Activated CD8-positive, alpha-beta T cell treated with anti-CD3 and anti-CD28 coated beads for 36 hours (primary cell): ENCODE measurements at regions of chr12 and their contacts with region 1.

Region 1: GRCh38 chr12:11730299-11731041 is 81.0 kb downstream of the ETV6 start:
- DNase-seq: no peak
- ATAC-seq: no peak
- H3K4me3 Mint-ChIP-seq: no peak overlapping the region
- H3K27ac Mint-ChIP-seq: peak overlapping the region; percentile 89
- H3K4me1 Mint-ChIP-seq: peaks cover 74% of the 10 kb centered on the region
- H3K27me3 Mint-ChIP-seq: no peaks in the 10 kb centered on the region
- CTCF ChIP-seq: no peak

Region 2: GRCh38 chr12:11513288-11513687 is 217.2 kb before region 1 on chr12:
- CTCF ChIA-PET with region 1: no interaction called
- POLR2A ChIA-PET with region 1: no interaction called
- intact Hi-C with region 1: no loop called
- DNase-seq: no peak
- ATAC-seq: no peak
- H3K4me3 Mint-ChIP-seq: no peak overlapping the region
- H3K27ac Mint-ChIP-seq: no peak overlapping the region
- H3K4me1 Mint-ChIP-seq: no peaks in the 10 kb centered on the region
- H3K27me3 Mint-ChIP-seq: no peaks in the 10 kb centered on the region
- CTCF ChIP-seq: no peak

Region 3: GRCh38 chr12:11535127-11535526 is 195.3 kb before region 1 on chr12:
- CTCF ChIA-PET with region 1: no interaction called
- POLR2A ChIA-PET with region 1: no interaction called
- intact Hi-C with region 1: no loop called
- DNase-seq: no peak
- ATAC-seq: no peak
- H3K4me3 Mint-ChIP-seq: no peak overlapping the region
- H3K27ac Mint-ChIP-seq: no peak overlapping the region
- H3K4me1 Mint-ChIP-seq: no peaks in the 10 kb centered on the region
- H3K27me3 Mint-ChIP-seq: no peaks in the 10 kb centered on the region
- CTCF ChIP-seq: no peak

Region 4: DNA sequence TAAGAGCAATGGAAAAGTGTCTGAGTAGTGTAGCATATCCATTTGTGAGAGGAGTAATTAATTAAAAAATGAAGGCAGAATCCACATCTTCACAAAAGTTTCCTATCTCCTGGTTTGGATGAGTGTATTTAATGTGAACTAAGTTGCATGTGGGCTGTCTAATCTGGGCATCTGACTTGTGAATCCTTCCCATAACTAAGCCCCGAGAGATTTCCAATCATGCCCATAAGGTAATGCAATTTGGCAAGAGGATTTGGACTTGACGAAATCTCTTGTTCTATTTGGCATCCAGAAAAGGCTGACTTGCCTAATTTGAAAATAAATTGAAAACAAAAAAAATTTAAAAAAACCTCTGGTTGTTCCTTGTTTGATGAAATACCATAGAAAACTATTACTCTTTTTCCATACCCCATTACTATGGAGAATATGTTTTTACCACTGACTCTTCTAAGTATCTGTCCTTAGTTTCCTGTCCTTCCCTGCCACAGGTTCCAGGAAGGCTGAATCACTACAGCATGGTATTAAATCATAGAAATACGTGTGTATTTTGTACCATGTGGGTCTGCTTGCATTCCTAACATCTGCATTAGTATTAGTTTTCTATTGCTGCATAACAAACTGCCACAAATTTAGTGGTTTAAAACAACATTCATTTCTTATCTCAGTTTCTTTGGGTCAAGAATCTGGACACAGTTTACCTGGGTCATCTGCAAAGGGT is 32.6 kb before region 1 on chr12:
- CTCF ChIA-PET with region 1: no interaction called
- POLR2A ChIA-PET with region 1: no interaction called
- intact Hi-C with region 1: no loop called
- DNase-seq: no peak
- ATAC-seq: no peak
- H3K4me3 Mint-ChIP-seq: no peak overlapping the region
- H3K27ac Mint-ChIP-seq: peak overlapping the region; percentile 24
- H3K4me1 Mint-ChIP-seq: peaks cover 30% of the 10 kb centered on the region
- H3K27me3 Mint-ChIP-seq: no peaks in the 10 kb centered on the region
- CTCF ChIP-seq: no peak

Region 5: GRCh38 chr12:11765817-11766794 is 35.6 kb after region 1 on chr12:
- CTCF ChIA-PET with region 1: interaction called, 5 read pairs
- POLR2A ChIA-PET with region 1: interaction called, 7 read pairs
- intact Hi-C with region 1: loop called (anchors 5 kb)
- DNase-seq: peak; percentile 91
- ATAC-seq: peak; percentile 96
- H3K4me3 Mint-ChIP-seq: peak overlapping the region; percentile 41
- H3K27ac Mint-ChIP-seq: peak overlapping the region; percentile 85
- H3K4me1 Mint-ChIP-seq: peaks cover 93% of the 10 kb centered on the region
- H3K27me3 Mint-ChIP-seq: no peaks in the 10 kb centered on the region
- CTCF ChIP-seq: no peak